Esophagus squamous epithelium (tissue), 5 donors: ENCODE measurements at regions of chr15 and their contacts with region 1.

Region 1: GRCh38 chr15:39874890-39875549 is 45.0 kb downstream of the GPR176 start:
- DNase-seq: no peak
- H3K4me3 ChIP-seq: no peak overlapping the region
- H3K27ac ChIP-seq: no peak overlapping the region
- H3K4me1 ChIP-seq: peaks cover 0 to 2% (median under 1%) of the 10 kb centered on the region in 3 donors
- H3K27me3 ChIP-seq: no peaks in the 10 kb centered on the region
- CTCF ChIP-seq: peak; percentile 11 to 67 (median 46)
- POLR2A ChIP-seq: no peak

Region 2: GRCh38 chr15:39801641-39802309 is 73.2 kb before region 1 on chr15:
- intact Hi-C with region 1: loop called (anchors 10 kb)
- DNase-seq: no peak
- H3K4me3 ChIP-seq: no peak overlapping the region
- H3K27ac ChIP-seq: no peak overlapping the region
- H3K4me1 ChIP-seq: peaks cover 0 to 10% (median 0%) of the 10 kb centered on the region in 3 donors
- H3K27me3 ChIP-seq: no peaks in the 10 kb centered on the region
- CTCF ChIP-seq: peak in 5 of 6 experiments; percentile 22 to 52 (median 29)
- POLR2A ChIP-seq: no peak